ENCODE measurements at regions of chr1 and their contacts with region 1.

Region 1: GRCh38 chr1:225428068-225428880 is 436 bp upstream of the LBR start:
- DNase-seq: peak; percentile 87 to 95
- H3K4me3 ChIP-seq: peak overlapping the region; percentile 94
- H3K27ac ChIP-seq: peak overlapping the region; percentile 98
- H3K4me1 ChIP-seq: peaks cover 44% of the 10 kb centered on the region
- H3K27me3 ChIP-seq: no peaks in the 10 kb centered on the region
- CTCF ChIP-seq: no peak

Region 2: DNA sequence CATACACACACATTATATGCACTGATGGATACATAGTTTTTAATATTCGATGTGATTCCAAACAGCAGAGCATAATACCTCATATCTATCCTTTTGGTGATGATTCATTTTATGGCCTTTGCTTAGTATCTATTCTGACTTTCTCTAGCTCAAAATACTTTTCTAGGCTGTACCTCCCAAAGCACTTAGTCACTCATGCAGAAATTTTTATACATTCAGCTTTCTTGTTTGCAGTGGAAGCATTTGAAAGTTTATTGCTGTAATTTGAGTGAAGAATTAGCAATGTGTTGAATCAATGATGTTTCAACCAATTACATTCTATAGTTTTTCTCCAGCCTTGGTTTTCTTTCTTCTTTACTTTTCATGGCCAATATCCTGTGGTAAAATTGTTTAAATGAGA is 67.1 kb before region 1 on chr1:
- CTCF ChIA-PET with region 1: no interaction called
- POLR2A ChIA-PET with region 1: no interaction called
- intact Hi-C with region 1: no loop called
- DNase-seq: no peak
- H3K4me3 ChIP-seq: no peak overlapping the region
- H3K27ac ChIP-seq: no peak overlapping the region
- H3K4me1 ChIP-seq: no peaks in the 10 kb centered on the region
- H3K27me3 ChIP-seq: no peaks in the 10 kb centered on the region
- CTCF ChIP-seq: no peak

Region 3: DNA sequence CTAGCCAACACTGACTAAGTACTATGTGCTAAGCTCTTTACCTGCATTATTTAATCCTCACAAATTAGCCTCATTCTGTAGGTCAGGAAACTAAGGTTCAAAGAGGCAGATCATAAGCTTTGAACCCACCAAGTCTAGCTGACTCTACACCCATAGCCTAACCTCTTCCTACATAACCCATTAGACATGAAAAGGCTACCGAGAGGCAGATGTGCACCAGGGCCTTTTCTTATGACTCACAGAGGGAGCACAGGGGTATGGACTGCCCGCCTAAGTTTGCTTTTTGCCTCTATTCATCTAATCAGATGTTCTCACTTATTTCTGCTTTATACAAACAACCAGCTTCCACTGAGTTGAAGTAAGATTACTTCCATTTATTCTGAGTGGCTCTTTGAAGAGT is 31.9 kb before region 1 on chr1:
- CTCF ChIA-PET with region 1: no interaction called
- POLR2A ChIA-PET with region 1: interaction called, 19 read pairs
- intact Hi-C with region 1: no loop called
- DNase-seq: no peak
- H3K4me3 ChIP-seq: no peak overlapping the region
- H3K27ac ChIP-seq: no peak overlapping the region
- H3K4me1 ChIP-seq: no peaks in the 10 kb centered on the region
- H3K27me3 ChIP-seq: no peaks in the 10 kb centered on the region
- CTCF ChIP-seq: no peak

Region 4: DNA sequence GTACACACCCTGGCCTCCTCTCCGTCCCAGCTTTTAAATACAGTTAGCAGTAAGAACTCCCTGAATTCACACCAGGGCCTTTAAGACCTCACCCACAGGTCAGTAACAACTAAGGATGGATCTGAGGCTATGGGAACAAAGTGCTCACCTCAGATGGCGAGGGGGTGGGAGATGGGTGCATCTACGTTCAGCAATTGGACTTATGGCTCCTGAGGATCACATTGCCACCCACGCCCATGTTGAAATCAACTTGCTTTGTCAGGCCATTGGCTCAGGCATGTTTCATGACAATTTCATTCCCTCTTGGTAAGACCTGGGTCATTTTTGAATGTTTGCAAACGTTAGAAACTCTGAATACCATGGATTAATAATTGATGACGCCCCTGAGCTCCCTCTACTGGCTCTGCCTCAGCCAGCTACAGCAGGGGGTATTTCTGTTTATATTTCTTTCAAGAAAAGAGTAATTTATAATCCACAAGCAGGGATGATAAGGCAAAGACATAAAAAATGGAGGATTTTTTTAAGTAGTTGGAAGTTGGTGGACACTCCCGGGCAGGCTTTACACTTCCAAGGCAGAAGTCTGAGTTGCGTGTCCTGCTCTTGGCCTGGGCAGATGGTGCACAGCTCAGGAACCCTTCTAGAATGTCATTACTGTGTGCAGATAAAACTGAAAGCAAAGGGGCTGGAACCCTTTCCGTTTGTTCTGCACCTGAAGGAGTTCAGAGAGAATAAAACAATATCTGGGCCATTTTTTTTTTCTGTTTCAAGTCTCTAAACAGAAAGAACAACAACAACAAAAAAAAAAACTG is 13.2 kb after region 1 on chr1:
- CTCF ChIA-PET with region 1: interaction called, 11 read pairs
- POLR2A ChIA-PET with region 1: interaction called, 9 read pairs
- intact Hi-C with region 1: loop called (anchors 1 kb)
- DNase-seq: no peak
- H3K4me3 ChIP-seq: no peak overlapping the region
- H3K27ac ChIP-seq: no peak overlapping the region
- H3K4me1 ChIP-seq: peaks cover 24% of the 10 kb centered on the region
- H3K27me3 ChIP-seq: no peaks in the 10 kb centered on the region
- CTCF ChIP-seq: no peak; the same call in 1 of the 2 replicates

Region 5: GRCh38 chr1:225447650-225448089 is 19.4 kb after region 1 on chr1:
- CTCF ChIA-PET with region 1: no interaction called
- POLR2A ChIA-PET with region 1: interaction called, 9 read pairs
- intact Hi-C with region 1: loop called (anchors 1 kb)
- DNase-seq: no peak
- H3K4me3 ChIP-seq: no peak overlapping the region
- H3K27ac ChIP-seq: peak overlapping the region; percentile 95
- H3K4me1 ChIP-seq: peaks cover 80% of the 10 kb centered on the region
- H3K27me3 ChIP-seq: no peaks in the 10 kb centered on the region
- CTCF ChIP-seq: no peak

Region 6: DNA sequence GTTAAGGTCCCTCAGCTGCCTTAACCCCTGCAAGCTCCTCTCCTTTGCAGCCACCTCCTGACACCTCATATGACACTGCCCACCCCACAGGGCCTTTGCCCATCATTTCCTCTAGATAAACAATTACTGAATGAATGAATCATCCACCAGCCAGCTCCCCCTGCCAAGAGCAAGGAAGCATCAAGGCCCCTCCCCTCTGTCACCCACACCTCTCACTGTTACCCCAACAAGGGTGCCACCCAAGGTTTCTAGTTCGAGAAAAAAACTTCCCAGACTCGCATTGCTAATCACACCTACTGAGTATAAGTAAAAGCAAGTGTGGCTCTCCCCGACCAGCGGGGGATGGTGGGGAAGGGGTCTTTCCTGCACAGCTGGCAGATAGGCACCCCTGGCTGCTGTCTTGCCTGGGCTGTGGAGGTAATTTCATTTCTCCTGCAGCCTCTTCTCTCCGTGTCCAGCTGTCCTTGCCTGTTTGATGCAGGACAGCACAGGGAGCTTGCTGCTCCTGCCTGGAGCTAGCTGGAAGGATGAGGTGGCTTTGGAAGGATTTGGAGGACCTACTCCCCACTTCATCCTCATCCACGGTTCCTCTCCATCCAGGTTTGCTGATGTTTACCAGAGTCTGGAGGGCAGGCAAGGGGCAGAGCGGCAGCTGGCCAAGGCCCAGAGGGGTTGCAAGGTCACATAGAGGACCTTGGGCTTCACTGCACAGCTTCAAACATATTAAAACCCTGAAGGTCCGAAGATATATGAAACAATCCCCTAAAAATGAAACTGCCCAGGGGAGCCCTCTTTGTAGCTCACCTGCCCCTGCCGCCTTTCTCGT is 32.7 kb after region 1 on chr1:
- CTCF ChIA-PET with region 1: interaction called, 3 read pairs
- POLR2A ChIA-PET with region 1: interaction called, 8 read pairs
- intact Hi-C with region 1: loop called (anchors 1 kb)
- DNase-seq: peak; percentile 76 to 81
- H3K4me3 ChIP-seq: no peak overlapping the region
- H3K27ac ChIP-seq: peak overlapping the region; percentile 68
- H3K4me1 ChIP-seq: peaks cover 62% of the 10 kb centered on the region
- H3K27me3 ChIP-seq: no peaks in the 10 kb centered on the region
- CTCF ChIP-seq: no peak

Region 7: DNA sequence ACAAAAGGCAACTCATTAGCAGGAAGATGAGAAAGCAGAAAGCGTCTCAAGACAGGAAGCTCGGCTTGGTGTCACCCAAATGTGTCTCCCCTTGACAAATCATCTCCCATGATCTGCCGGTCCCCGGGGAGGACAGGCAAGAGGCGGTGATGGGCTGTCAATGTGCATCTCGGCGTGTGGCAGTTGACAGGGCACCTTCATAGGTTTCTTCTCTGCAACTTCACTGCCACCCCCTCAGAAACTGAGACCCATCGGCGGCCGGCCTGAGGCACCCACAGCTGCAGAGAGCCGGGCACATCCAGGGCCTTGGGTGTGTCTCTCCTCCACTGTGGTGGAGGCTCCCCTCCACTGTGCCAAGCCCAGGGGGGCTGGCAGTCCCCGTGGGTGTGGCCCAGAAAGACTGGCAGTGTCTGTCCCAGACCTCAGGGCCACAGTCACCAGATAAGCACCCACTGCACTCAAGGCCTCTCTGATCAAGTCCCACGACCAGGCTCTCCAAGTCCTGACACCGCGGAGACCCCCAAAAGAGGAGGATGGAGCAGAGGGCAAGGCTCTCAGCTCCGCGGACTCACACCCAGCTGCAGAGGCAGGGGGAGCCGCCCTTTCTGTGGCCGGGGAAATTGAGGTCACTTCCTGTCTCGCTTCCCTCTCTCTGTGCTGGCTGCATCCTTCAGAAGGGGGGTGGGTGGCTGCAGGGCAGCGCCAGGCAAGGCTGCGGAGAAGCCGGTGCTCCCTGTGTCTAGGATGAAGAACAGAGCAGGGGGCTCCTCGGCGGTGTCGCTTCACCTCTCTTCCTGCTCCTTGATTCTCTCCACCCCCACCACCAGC is 39.1 kb after region 1 on chr1:
- CTCF ChIA-PET with region 1: no interaction called
- POLR2A ChIA-PET with region 1: no interaction called
- intact Hi-C with region 1: loop called (anchors 1 kb)
- DNase-seq: no peak
- H3K4me3 ChIP-seq: no peak overlapping the region
- H3K27ac ChIP-seq: no peak overlapping the region
- H3K4me1 ChIP-seq: peaks cover 42% of the 10 kb centered on the region
- H3K27me3 ChIP-seq: no peaks in the 10 kb centered on the region
- CTCF ChIP-seq: no peak

Region 8: GRCh38 chr1:225923692-225924555 is 495.6 kb after region 1 on chr1 and contains the start of gene PYCR2:
- CTCF ChIA-PET with region 1: no interaction called
- POLR2A ChIA-PET with region 1: no interaction called
- intact Hi-C with region 1: loop called (anchors 5 kb)
- DNase-seq: peak; percentile 86 to 99
- H3K4me3 ChIP-seq: peak within 1 kb of the TSS; percentile 100
- H3K27ac ChIP-seq: peak within 1 kb of the TSS; percentile 72
- H3K4me1 ChIP-seq: peaks cover 16% of the 10 kb centered on the region
- H3K27me3 ChIP-seq: no peaks in the 10 kb centered on the region
- CTCF ChIP-seq: no peak
- total RNA-seq, gene PYCR2: 100 and 112 TPM in 2 replicates

Measured in PC-9 (cell line).